ENCODE measurements at regions of chr1 and their contacts with region 1.

Region 1: GRCh38 chr1:214602764-214603657 is at the start of gene CENPF:
- DNase-seq: peak; percentile 93 to 96 (median 95)
- H3K4me3 ChIP-seq: peak within 1 kb of the TSS; percentile 43 to 59
- H3K4me3 Mint-ChIP-seq: peak within 1 kb of the TSS; percentile 88 to 98 (median 96)
- H3K27ac ChIP-seq: no peak within 1 kb of the TSS
- H3K27ac Mint-ChIP-seq: peak within 1 kb of the TSS; percentile 69 to 94 (median 90)
- H3K4me1 ChIP-seq: peaks cover 7% of the 10 kb centered on the region
- H3K4me1 Mint-ChIP-seq: peaks cover 9 to 25% (median 16%) of the 10 kb centered on the region in 4 donors
- H3K27me3 ChIP-seq: no peaks in the 10 kb centered on the region
- H3K27me3 Mint-ChIP-seq: no peaks in the 10 kb centered on the region
- total RNA-seq, gene CENPF: 2.2 to 2.8 TPM

Region 2: GRCh38 chr1:214281021-214281719 is 321.8 kb before region 1 on chr1 and contains the start of gene SMYD2:
- CTCF ChIA-PET with region 1: no interaction called
- POLR2A ChIA-PET with region 1: no interaction called
- intact Hi-C with region 1: loop called (anchors 5 kb)
- DNase-seq: peak; percentile 67 to 77 (median 72)
- H3K4me3 ChIP-seq: peak within 1 kb of the TSS; percentile 79
- H3K4me3 Mint-ChIP-seq: peak within 1 kb of the TSS; percentile 89 to 96 (median 92)
- H3K27ac ChIP-seq: peak within 1 kb of the TSS; percentile 68
- H3K27ac Mint-ChIP-seq: peak within 1 kb of the TSS; percentile 69 to 97 (median 93)
- H3K4me1 ChIP-seq: peaks cover 40% of the 10 kb centered on the region
- H3K4me1 Mint-ChIP-seq: peaks cover 34 to 56% (median 45%) of the 10 kb centered on the region in 4 donors
- H3K27me3 ChIP-seq: no peaks in the 10 kb centered on the region
- H3K27me3 Mint-ChIP-seq: no peaks in the 10 kb centered on the region
- total RNA-seq, gene SMYD2: 41.4 to 41.9 TPM

Region 3: GRCh38 chr1:214427871-214428277 is 175.1 kb before region 1 on chr1:
- CTCF ChIA-PET with region 1: no interaction called
- POLR2A ChIA-PET with region 1: interaction called, 3 read pairs
- intact Hi-C with region 1: loop called (anchors 2 kb)
- DNase-seq: peak; percentile 73 to 81 (median 74)
- H3K4me3 ChIP-seq: no peak overlapping the region
- H3K4me3 Mint-ChIP-seq: peak overlapping the region; percentile 5 to 77 (median 50)
- H3K27ac ChIP-seq: no peak overlapping the region
- H3K27ac Mint-ChIP-seq: peak overlapping the region; percentile 66 to 93 (median 90)
- H3K4me1 ChIP-seq: peaks cover 21% of the 10 kb centered on the region
- H3K4me1 Mint-ChIP-seq: peaks cover 15 to 27% (median 22%) of the 10 kb centered on the region in 4 donors
- H3K27me3 ChIP-seq: no peaks in the 10 kb centered on the region
- H3K27me3 Mint-ChIP-seq: peaks cover 0 to 1% of the 10 kb centered on the region in 2 donors

Region 4: GRCh38 chr1:215146341-215146826 is 543.4 kb after region 1 on chr1:
- CTCF ChIA-PET with region 1: no interaction called
- POLR2A ChIA-PET with region 1: no interaction called
- intact Hi-C with region 1: no loop called
- DNase-seq: no peak
- H3K4me3 ChIP-seq: no peak overlapping the region
- H3K4me3 Mint-ChIP-seq: no peak overlapping the region
- H3K27ac ChIP-seq: no peak overlapping the region
- H3K27ac Mint-ChIP-seq: no peak overlapping the region
- H3K4me1 ChIP-seq: no peaks in the 10 kb centered on the region
- H3K4me1 Mint-ChIP-seq: no peaks in the 10 kb centered on the region
- H3K27me3 ChIP-seq: no peaks in the 10 kb centered on the region
- H3K27me3 Mint-ChIP-seq: no peaks in the 10 kb centered on the region

Measured in CD4-positive, alpha-beta memory T cell (primary cell).